PC-3 (cell line): ENCODE measurements at regions of chr4 and their contacts with region 1.

Region 1: GRCh38 chr4:55321707-55322264 is 24.3 kb upstream of the SRD5A3 start:
- DNase-seq: peak; percentile 98
- ATAC-seq: peak; percentile 70
- H3K4me3 ChIP-seq: no peak overlapping the region
- H3K27ac ChIP-seq: no peak overlapping the region
- H3K4me1 ChIP-seq: peaks cover 11% of the 10 kb centered on the region
- H3K27me3 ChIP-seq: no peaks in the 10 kb centered on the region
- CTCF ChIP-seq: peak; percentile 92

Region 2: GRCh38 chr4:54999003-54999402 is 322.8 kb before region 1 on chr4:
- CTCF ChIA-PET with region 1: no interaction called
- POLR2A ChIA-PET with region 1: no interaction called
- intact Hi-C with region 1: loop called (anchors 1 kb)
- DNase-seq: peak; percentile 55
- ATAC-seq: peak; percentile 60
- H3K4me3 ChIP-seq: no peak overlapping the region
- H3K27ac ChIP-seq: no peak overlapping the region
- H3K4me1 ChIP-seq: peaks cover 7% of the 10 kb centered on the region; the same call in 1 of the 2 replicates
- H3K27me3 ChIP-seq: no peaks in the 10 kb centered on the region
- CTCF ChIP-seq: peak; percentile 75

Region 3: DNA sequence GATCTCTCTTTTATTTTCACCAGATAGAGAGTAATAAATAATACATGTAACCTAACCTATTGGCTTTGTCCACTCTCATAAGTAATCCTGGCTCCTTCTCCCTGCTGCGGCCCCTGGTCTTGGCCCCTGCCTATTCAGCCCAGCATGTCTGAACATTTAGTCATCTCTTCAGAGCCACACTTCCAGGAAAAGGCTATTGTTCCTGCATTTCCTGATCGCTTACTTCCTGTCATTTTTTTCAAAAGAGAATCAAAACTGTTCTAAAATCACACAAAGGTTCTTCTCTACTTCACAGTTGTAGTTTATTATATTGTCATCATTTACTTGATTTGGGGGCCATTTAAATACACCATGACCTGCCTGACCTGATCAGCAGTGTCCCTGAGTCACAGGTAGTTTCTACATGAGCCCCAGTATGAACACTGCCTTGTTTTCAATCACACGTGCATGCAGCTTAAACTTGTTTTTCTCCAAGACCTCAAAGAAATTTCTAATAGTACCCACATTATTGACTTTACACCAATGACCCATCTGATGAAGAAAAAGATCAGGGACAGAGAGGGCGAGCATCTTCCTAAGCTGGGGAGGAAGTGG is 149.0 kb before region 1 on chr4:
- CTCF ChIA-PET with region 1: no interaction called
- POLR2A ChIA-PET with region 1: no interaction called
- intact Hi-C with region 1: no loop called
- DNase-seq: peak; percentile 87
- ATAC-seq: peak; percentile 48
- H3K4me3 ChIP-seq: peak overlapping the region; percentile 16; the same call in 1 of the 2 replicates
- H3K27ac ChIP-seq: peak overlapping the region; percentile 87
- H3K4me1 ChIP-seq: peaks cover 72% of the 10 kb centered on the region
- H3K27me3 ChIP-seq: no peaks in the 10 kb centered on the region
- CTCF ChIP-seq: no peak

Region 4: DNA sequence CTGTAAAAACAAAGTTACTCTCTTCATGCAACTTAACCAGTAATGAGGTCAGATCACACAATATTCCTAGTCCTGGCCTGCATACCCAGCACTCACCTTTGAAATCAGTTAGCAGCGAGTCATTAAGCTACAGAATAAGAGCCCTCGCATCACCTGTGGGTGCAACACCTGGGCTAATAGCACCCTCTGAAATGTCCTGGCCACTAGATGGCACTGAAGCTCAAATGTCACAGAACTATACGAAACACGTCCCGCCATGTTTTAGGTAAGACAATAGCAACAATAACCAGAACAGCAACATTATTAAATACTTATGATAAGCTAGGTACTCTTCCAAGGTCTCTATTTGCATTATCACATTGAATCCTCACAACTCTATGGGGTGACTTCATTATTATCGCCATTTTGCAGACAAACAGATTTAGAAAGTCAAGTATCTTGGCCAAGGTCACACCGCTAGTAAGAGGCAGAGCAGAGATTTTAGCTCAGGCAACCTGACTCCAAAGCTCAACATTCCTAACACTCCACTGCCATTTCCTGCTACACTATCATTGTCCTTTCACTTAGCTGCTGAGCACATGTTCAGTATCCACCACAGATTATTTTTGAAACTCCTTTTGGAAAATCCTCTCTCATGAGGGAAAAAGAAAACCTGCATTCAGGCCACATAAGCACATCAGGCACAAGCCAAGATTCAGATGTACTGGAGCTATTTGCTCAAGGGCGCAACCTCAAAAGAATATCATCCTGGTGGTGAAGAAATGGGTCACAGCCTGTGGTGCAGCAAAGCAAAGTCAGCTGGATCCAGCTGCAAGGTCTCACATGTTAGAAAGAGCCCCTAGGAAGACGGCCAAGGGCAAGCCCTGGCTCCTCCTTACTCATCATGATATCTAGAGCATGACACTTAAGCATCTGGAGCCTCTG is 136.9 kb before region 1 on chr4:
- CTCF ChIA-PET with region 1: interaction called, 3 read pairs
- POLR2A ChIA-PET with region 1: no interaction called
- intact Hi-C with region 1: loop called (anchors 2 kb)
- DNase-seq: peak; percentile 76
- ATAC-seq: peak; percentile 38
- H3K4me3 ChIP-seq: peak overlapping the region; percentile 27
- H3K27ac ChIP-seq: peak overlapping the region; percentile 76
- H3K4me1 ChIP-seq: peaks cover 33% of the 10 kb centered on the region
- H3K27me3 ChIP-seq: no peaks in the 10 kb centered on the region
- CTCF ChIP-seq: peak; percentile 89

Region 5: GRCh38 chr4:55303818-55304217 is 18.0 kb before region 1 on chr4:
- CTCF ChIA-PET with region 1: no interaction called
- POLR2A ChIA-PET with region 1: no interaction called
- intact Hi-C with region 1: no loop called
- DNase-seq: peak; percentile 87
- ATAC-seq: peak; percentile 98
- H3K4me3 ChIP-seq: no peak overlapping the region
- H3K27ac ChIP-seq: peak overlapping the region; percentile 30
- H3K4me1 ChIP-seq: peaks cover 16% of the 10 kb centered on the region
- H3K27me3 ChIP-seq: no peaks in the 10 kb centered on the region
- CTCF ChIP-seq: no peak

Region 6: DNA sequence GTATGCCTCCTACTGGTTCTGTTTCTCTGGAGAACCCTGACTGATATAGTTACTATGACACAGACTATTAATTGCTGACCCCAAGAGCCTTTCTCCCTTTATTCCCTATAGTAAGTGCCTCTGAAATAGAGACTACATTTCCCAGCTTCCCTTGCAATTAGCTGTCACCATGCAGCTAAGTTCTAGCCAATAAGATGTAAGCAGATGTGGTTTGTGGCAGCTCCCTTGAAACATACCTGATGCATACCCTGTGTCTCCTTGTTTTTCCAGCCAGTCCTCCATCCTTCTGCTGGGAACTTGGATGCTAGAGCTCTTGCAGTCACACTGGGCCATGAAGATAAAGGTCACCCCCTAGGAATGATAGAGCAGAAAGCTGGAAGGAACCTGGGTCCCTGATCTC is 64.3 kb after region 1 on chr4:
- CTCF ChIA-PET with region 1: no interaction called
- POLR2A ChIA-PET with region 1: no interaction called
- intact Hi-C with region 1: no loop called
- DNase-seq: peak; percentile 56
- ATAC-seq: peak; percentile 87
- H3K4me3 ChIP-seq: no peak overlapping the region
- H3K27ac ChIP-seq: no peak overlapping the region
- H3K4me1 ChIP-seq: peaks cover 12% of the 10 kb centered on the region
- H3K27me3 ChIP-seq: no peaks in the 10 kb centered on the region
- CTCF ChIP-seq: no peak

Region 7: GRCh38 chr4:55635741-55636655 is 314.2 kb after region 1 on chr4 and contains the start of gene NMU:
- CTCF ChIA-PET with region 1: no interaction called
- POLR2A ChIA-PET with region 1: no interaction called
- intact Hi-C with region 1: loop called (anchors 10 kb)
- DNase-seq: peak; percentile 79
- ATAC-seq: peak; percentile 84
- H3K4me3 ChIP-seq: peak within 1 kb of the TSS; percentile 69
- H3K27ac ChIP-seq: no peak within 1 kb of the TSS
- H3K4me1 ChIP-seq: peaks cover 13% of the 10 kb centered on the region
- H3K27me3 ChIP-seq: no peaks in the 10 kb centered on the region
- CTCF ChIP-seq: peak; percentile 43; the same call in 1 of the 2 replicates
- total RNA-seq, gene NMU: 28.5 and 40.2 TPM in 2 replicates